Astrocyte of the cerebellum (primary cell): ENCODE measurements at regions of chr10 and their contacts with region 1.

Region 1: GRCh38 chr10:15363031-15363430 is 8.1 kb downstream of the FAM171A1 start:
- DNase-seq: no peak
- H3K4me3 ChIP-seq: no peak overlapping the region
- CTCF ChIP-seq: no peak

Region 2: DNA sequence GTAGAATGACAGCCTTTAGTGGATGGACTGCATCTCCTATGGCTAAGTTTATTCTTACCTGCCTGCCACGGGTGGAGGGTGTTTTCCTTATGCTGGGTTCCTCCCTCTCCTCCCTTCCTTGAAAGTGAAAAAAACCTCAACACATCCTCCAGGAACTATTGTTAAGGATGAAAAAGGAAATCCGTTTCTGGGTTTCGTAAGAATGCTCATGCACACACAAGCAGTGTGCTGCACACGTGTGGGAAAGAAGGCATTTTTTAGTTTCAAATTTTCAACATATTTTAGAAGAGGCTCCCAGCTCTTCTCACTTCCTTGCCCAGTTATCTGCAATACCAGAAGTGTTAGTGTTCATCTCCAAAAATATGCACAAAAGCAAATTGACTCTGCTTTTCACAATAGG is 82.6 kb before region 1 on chr10:
- in situ Hi-C with region 1: loop called (anchors 5 kb)
- DNase-seq: no peak
- H3K4me3 ChIP-seq: no peak overlapping the region
- CTCF ChIP-seq: no peak

Region 3: GRCh38 chr10:15395935-15396334 is 32.9 kb after region 1 on chr10:
- in situ Hi-C with region 1: no loop called
- DNase-seq: no peak
- H3K4me3 ChIP-seq: no peak overlapping the region
- CTCF ChIP-seq: no peak